ENCODE measurements at regions of chr11 and their contacts with region 1.

Region 1: DNA sequence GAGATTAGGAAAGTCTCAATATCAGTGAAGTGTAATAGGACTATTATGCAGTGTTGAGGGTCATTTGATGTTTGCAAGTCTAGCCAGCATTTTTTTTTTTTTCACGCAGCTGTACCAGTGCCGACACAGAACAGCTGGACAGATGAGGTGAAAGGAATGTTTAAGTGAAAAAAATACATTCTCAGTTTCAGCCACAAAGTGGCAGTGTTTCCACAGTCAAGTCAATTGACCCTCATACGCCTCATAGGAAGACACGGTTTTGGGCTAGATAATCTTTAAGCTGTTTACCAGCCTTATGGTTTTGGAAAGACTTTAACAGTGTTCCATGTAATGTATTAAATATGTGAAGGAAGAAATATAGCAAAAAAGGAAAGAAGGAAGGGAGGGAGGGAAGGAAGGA is 349.9 kb upstream of the ANO3 start:
- DNase-seq: peak; percentile 20
- CTCF ChIP-seq: peak; percentile 46

Region 2: DNA sequence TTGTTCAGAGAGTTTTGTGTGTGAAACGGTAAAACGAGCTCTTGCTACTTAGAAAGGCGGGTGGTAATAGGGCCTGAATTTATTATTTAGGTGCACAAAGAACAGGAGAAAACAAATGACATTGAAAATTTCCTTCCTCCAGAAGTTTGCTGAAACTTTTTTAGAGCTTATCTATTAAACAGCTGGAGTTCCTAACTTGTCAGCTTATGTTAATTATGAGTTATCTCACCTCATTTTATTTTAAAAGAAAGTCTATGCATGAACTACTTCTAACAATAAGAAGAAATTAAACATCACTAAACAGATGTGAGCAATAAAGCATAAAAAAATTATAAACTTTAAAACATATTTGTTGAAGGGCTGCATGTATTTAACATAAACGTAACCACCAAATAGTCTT is 24.0 kb before region 1 on chr11:
- CTCF ChIA-PET with region 1: interaction called, 15 read pairs
- POLR2A ChIA-PET with region 1: no interaction called
- DNase-seq: no peak
- CTCF ChIP-seq: no peak

Region 3: DNA sequence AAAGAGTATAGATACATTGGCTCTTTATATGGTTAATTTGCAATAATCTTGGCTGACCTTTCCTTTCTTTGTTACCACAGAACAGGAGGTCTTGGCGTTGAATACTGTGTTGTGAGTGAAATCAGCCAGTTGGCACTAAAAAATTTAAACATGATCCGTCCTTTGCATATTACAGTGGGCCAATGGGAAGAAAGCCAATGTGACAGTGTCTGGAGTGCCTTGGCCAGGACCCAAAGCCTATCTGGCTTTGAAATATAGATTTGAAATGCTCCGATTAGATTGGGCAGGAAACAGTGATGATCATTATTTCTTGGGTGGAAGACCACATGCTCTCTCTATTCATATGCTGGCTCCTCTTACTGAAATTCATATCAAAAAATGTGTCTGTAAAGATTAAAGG is 10.3 kb after region 1 on chr11:
- CTCF ChIA-PET with region 1: interaction called, 41 read pairs
- POLR2A ChIA-PET with region 1: no interaction called
- DNase-seq: no peak
- CTCF ChIP-seq: no peak

Region 4: DNA sequence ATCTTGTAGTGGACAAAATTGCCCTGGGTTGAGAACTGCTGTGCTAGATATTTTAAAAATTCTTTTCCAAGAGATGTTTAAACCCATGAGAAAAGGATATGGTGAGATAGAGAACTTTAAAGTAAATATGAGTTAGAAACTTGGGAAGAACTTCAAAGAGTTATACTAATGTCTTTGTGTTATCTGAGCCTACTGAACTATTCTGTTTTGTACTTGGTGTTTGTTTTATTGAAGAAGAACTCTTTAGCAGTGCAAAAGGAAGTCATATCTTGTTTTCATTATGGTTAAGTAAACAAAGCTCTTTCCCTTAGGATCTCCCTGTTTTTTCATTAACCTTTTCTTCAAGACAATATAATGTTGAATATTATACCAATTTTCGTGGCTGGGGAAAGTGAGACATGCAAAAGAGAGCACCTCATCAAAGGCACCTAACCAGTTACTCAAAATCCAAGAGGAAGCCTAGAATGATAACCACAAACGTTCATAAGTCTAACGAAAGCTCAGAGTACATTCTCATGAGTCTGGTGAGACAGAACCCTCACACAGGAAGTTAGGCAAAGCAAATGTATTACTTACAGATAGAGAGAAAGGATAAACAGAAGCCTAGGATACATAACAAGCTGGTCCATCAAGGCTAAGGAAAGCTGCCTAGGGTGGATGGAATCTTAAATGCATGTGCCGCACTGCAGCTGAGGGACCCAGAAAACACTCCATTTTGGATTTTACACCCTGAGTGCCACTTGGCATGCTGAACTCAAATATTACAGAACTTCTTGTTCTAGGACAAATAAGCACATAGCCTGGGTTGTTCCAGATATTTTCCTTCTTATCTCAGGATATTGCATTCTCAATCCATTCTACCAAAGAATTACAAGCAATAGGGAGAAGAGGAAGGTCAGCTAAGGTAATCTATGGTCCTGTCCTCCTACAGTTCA is 237.5 kb after region 1 on chr11:
- CTCF ChIA-PET with region 1: interaction called, 10 read pairs
- POLR2A ChIA-PET with region 1: no interaction called
- DNase-seq: no peak
- CTCF ChIP-seq: no peak

Region 5: GRCh38 chr11:26276798-26277424 is 294.9 kb after region 1 on chr11:
- CTCF ChIA-PET with region 1: interaction called, 13 read pairs
- POLR2A ChIA-PET with region 1: no interaction called
- DNase-seq: peak; percentile 17
- CTCF ChIP-seq: peak; percentile 97